ENCODE measurements at regions of chr1 and their contacts with region 1.

Region 1: DNA sequence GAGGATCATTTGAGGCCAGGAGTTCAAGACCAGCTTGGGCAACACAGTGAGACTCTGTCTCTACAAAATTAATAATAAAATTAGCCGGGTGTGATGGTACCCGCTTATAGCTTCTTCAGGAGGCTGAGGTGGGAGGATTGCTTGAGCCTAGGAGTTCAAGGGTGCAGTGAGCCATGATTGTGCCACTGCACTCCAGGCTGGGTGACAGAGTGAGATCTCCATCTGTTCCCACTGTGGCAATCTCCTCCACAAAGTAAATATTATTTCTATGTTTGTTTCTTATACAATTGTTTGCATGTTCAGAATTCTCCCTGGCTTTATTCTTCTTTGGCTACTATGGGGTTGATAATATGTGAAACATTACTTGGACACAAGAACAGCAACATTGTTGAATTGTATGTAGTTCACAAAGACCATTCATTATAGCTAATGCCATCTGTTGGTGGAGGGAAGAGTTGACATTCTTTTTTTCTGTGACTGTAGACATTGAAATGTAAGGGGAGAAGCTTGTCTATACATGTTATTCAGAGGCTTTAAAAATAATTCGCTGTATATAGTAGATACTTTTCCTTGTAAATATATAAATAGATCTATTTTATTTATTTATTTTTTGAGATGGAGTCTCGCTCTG is 47.8 kb upstream of the SRSF10 start:
- DNase-seq: no peak
- ATAC-seq: peak; percentile 81
- H3K4me3 ChIP-seq: no peak overlapping the region
- H3K27ac ChIP-seq: peak overlapping the region; percentile 51; the same call in 1 of the 2 replicates
- H3K4me1 ChIP-seq: peaks cover 11% of the 10 kb centered on the region
- H3K27me3 ChIP-seq: no peaks in the 10 kb centered on the region
- CTCF ChIP-seq: no peak; the same call in 1 of the 2 replicates

Region 2: DNA sequence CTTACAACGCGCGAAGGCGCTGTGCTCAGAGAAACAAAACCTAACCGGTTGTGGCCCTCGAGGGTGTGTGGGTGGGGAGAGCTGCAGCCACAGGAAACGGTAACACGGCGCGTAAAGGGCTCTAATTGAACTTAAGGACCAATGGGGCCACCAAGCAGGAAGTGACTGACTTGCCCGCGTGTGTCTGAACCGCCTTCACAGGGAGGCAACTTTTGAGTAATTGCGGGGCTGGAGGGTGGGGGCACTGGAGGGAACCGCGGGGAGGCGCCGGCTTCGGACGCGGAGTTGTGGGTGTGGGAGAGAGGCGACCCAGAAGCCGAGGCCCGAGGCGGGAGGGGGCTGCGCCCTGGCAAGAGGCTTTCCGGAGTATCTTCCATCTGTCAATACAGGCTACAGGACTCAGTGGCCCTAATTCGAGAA is 68.9 kb before region 1 on chr1:
- CTCF ChIA-PET with region 1: no interaction called
- POLR2A ChIA-PET with region 1: no interaction called
- in situ Hi-C with region 1: loop called (anchors 10 kb)
- intact Hi-C with region 1: no loop called
- DNase-seq: no peak
- ATAC-seq: peak; percentile 74
- H3K4me3 ChIP-seq: peak overlapping the region; percentile 78 to 98
- H3K27ac ChIP-seq: peak overlapping the region; percentile 100
- H3K4me1 ChIP-seq: peaks cover 51% of the 10 kb centered on the region
- H3K27me3 ChIP-seq: no peaks in the 10 kb centered on the region
- CTCF ChIP-seq: peak; percentile 50; the same call in 1 of the 2 replicates

Region 3: DNA sequence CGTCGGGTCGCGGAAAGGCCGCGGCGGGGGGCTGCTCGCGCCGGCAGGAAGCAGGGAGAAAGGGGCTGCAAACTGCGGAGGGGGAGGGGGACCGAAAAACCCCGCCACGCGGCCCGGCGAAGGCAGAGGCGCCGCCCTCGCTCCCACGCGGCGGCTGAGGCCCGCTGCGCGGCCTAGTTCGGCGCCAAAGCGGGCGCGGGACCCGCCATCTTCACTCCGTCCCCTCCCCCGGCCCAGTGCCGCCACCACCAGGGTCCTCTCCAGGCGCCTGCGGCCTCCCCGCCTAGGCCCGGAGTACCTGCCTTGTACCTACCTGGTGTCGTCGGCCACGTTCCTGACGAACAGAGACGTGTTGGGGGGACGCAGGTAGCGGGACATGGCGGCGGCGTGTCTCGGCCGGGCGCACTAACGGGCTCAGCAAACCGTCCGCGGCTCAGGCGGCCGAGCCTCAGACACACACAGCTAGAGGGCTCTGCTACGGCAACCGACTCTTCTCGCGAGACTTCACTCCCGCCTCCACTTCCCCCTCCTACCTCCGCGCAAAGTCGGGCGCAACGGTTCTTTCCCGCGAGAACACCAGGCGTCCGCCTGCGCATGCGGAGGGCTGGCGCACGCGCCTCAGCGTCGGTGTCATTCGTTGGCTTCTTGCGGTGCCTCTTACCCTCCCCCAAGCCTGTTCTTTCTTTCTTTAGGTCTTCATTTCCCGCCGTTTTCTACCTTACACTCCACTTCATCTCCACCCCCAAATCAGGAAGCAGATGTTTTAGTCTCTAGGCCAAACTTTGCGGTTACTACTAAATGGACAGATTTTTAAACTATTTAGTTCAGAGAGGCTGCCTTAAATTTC is 47.9 kb before region 1 on chr1 and contains the start of gene SRSF10:
- CTCF ChIA-PET with region 1: no interaction called
- POLR2A ChIA-PET with region 1: no interaction called
- in situ Hi-C with region 1: no loop called
- intact Hi-C with region 1: loop called (anchors 2 kb)
- DNase-seq: peak; percentile 97
- ATAC-seq: peak; percentile 98
- H3K4me3 ChIP-seq: peak within 1 kb of the TSS; percentile 70 to 91
- H3K27ac ChIP-seq: peak within 1 kb of the TSS; percentile 100
- H3K4me1 ChIP-seq: peaks cover 52% of the 10 kb centered on the region
- H3K27me3 ChIP-seq: no peaks in the 10 kb centered on the region
- CTCF ChIP-seq: no peak; the same call in 1 of the 2 replicates
- total RNA-seq, gene SRSF10: 137 TPM

Region 4: GRCh38 chr1:24010650-24011049 is 17.3 kb before region 1 on chr1:
- CTCF ChIA-PET with region 1: interaction called, 13 read pairs
- POLR2A ChIA-PET with region 1: no interaction called
- in situ Hi-C with region 1: no loop called
- intact Hi-C with region 1: no loop called
- DNase-seq: no peak
- ATAC-seq: no peak
- H3K4me3 ChIP-seq: no peak overlapping the region
- H3K27ac ChIP-seq: peak overlapping the region; percentile 68; the same call in 1 of the 2 replicates
- H3K4me1 ChIP-seq: peaks cover 33% of the 10 kb centered on the region
- H3K27me3 ChIP-seq: no peaks in the 10 kb centered on the region
- CTCF ChIP-seq: no peak